ENCODE measurements at regions of chr10 and their contacts with region 1.

Region 1: DNA sequence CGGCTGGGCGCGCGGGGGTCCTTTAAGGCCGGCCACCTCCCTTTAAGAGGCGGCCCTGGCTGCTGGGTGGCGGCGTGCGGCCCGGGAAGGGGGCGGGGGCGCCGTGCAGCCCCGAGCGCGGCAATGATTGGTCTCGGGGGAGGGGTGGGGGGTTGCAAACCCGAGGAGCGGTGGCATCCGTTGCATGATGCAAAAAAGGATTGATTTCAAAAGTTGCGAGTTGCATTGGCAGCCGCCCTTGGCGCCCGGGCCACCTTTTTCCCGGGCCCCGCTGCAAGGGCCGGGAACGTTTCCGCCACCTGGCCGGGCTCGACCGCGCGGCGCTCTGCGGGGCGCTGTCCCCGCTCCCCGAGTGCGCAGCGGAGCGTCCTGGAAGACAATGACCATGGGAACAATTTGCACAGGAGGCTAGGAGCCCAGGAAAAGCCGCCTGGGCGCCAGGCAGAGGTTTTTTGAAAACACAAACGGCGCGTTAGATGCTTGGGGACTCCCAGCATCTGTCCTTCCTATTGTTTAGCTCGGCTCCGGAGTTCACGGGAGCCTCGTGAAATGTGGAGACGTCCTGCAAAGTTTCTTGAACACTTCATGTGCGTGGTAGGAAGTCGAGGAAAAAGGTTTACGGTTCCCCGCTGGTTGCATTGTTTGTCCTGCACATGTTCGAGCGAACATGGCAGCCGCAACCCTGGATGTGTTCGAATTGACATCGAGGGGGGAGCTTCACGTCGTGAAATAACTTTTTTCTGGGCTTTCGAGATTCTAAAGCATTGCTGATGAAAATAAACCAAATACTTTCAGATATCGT is at the start of gene SEPHS1:
- DNase-seq: peak; percentile 68 to 74
- ATAC-seq: peak; percentile 61 to 88 (median 78)
- H3K4me3 ChIP-seq: peak within 1 kb of the TSS; percentile 64 to 95 (median 86)
- H3K27ac ChIP-seq: peak within 1 kb of the TSS; percentile 92 to 99 (median 98)
- H3K4me1 ChIP-seq: peaks cover 0 to 37% (median 34%) of the 10 kb centered on the region in 9 donors
- H3K27me3 ChIP-seq: peaks cover 0 to 27% (median 23%) of the 10 kb centered on the region in 7 donors
- CTCF ChIP-seq: peak in 3 of 9 donors; percentile 14 to 26 (median 16)
- total RNA-seq, gene SEPHS1: 26.7 to 38.9 (median 30.4) TPM

Region 2: GRCh38 chr10:13299437-13300287 is 48.8 kb before region 1 on chr10 and contains the start of gene PHYH:
- intact Hi-C with region 1: loop called in 6 of 10 experiments (anchors 5 kb)
- DNase-seq: peak; percentile 91 to 94
- ATAC-seq: peak; percentile 89 to 96 (median 94)
- H3K4me3 ChIP-seq: peak within 1 kb of the TSS; percentile 68 to 93 (median 80)
- H3K27ac ChIP-seq: peak within 1 kb of the TSS; percentile 96 to 100 (median 100)
- H3K4me1 ChIP-seq: peaks cover 0 to 36% (median 22%) of the 10 kb centered on the region in 9 donors
- H3K27me3 ChIP-seq: no peaks in the 10 kb centered on the region
- CTCF ChIP-seq: no peak
- total RNA-seq, gene PHYH: 97.3 to 188 (median 162) TPM

Measured in heart right ventricle (tissue), 16 donors.